Sigmoid colon (tissue), 7 donors: ENCODE measurements at regions of chr19 and their contacts with region 1.

Region 1: DNA sequence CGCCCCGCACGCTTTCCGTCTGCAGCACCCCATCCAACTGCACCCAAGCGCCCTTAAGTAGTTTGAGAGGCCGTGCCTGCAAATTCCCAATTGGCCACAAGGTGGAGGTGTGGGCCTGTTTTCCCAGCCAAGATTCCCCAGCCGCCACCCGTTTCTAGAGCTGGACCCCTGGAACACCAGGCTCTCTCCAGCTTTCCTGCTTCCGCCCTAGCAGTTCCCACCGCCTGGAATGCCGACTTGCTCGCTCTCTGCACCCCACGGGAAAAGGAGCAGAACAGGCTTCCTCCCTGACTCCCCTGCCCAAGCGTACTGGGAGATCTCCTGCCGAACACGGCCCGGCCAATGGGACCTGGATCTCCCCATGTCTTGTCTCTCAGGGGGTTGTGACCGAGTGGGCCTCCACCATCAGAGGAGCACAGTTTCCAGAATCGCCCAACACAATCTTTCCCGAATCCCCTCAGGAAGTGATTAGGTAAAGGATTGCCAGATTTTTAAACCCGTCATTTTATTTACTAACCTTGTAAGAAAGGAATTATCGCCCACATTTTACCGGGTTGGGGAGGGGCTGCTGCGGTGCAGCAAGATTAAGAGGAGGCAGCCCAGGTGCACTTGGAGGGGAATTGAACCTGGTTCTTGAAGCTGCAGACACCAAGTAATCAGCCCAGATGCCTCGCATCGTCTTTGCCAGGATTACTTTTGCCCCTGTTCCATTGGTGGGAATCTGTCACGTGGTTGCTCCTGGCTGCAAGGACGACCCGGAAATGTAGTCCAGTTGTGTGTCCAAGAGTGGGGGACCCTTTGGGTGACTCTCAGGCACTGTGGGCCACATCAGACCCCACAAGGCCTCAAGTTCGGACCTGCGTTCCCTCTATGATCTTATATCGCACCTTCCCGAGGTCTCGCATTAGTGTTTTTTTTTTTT is 3.5 kb upstream of the NAPSA start:
- DNase-seq: peak; percentile 93
- H3K4me3 ChIP-seq: peak overlapping the region; percentile 50 to 61 (median 58)
- H3K27ac ChIP-seq: peak overlapping the region; percentile 67 to 84 (median 79)
- H3K4me1 ChIP-seq: peaks cover 0 to 5% (median 2%) of the 10 kb centered on the region in 4 donors
- H3K27me3 ChIP-seq: no peaks in the 10 kb centered on the region
- CTCF ChIP-seq: peak; percentile 65 to 93 (median 87)
- EP300 ChIP-seq: no peak
- POLR2A ChIP-seq: no peak

Region 2: GRCh38 chr19:50414864-50415660 is 46.2 kb after region 1 on chr19:
- intact Hi-C with region 1: loop called (anchors 1 kb)
- DNase-seq: peak; percentile 86
- H3K4me3 ChIP-seq: no peak overlapping the region
- H3K27ac ChIP-seq: no peak overlapping the region
- H3K4me1 ChIP-seq: peaks cover 0 to 9% (median 7%) of the 10 kb centered on the region in 4 donors
- H3K27me3 ChIP-seq: peaks cover 17 to 37% (median 31%) of the 10 kb centered on the region in 3 donors
- CTCF ChIP-seq: peak; percentile 66 to 90 (median 71)
- EP300 ChIP-seq: no peak
- POLR2A ChIP-seq: no peak

Region 3: DNA sequence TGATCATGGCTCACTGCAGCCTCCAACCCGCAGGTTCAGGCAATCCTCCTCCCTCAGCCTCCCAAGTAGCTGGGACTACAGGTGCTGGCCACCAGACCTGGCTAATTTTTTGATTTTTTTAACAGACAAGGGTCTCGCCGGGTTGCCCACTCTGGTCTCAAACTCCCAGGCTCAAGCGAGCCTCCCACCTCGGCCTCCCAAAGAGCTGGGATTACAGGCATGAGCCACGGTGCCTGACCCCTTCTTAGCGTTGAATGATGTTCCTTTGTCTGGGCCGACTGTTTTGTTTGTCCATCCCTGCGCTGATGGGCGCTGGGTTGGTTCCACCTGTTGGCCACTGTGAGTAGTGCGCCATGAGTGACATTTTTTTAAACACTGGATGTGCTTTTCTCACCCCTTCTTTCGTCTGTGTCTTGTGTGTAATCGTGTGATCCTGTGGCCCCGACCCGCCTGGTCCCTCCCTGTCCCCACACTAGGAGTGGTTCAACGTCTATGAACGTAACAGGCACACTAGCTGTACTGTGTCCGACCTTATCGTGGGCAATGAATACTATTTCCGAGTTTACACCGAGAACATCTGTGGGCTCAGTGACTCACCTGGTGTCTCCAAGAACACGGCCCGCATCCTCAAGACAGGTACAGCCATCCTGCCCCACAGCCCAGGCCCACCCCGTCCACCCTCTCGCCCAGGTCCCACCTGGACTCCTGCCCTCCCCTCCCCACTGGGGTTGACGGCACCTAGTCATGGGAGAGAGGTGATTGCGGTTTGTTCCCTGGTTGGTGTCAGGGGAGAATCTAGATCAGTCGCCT is 92.4 kb after region 1 on chr19:
- intact Hi-C with region 1: loop called (anchors 2 kb)
- DNase-seq: no peak
- H3K4me3 ChIP-seq: no peak overlapping the region
- H3K27ac ChIP-seq: no peak overlapping the region
- H3K4me1 ChIP-seq: no peaks in the 10 kb centered on the region
- H3K27me3 ChIP-seq: peaks cover 4 to 50% (median 26%) of the 10 kb centered on the region in 3 donors
- CTCF ChIP-seq: peak; percentile 38 to 75 (median 71)
- EP300 ChIP-seq: no peak
- POLR2A ChIP-seq: no peak

Region 4: DNA sequence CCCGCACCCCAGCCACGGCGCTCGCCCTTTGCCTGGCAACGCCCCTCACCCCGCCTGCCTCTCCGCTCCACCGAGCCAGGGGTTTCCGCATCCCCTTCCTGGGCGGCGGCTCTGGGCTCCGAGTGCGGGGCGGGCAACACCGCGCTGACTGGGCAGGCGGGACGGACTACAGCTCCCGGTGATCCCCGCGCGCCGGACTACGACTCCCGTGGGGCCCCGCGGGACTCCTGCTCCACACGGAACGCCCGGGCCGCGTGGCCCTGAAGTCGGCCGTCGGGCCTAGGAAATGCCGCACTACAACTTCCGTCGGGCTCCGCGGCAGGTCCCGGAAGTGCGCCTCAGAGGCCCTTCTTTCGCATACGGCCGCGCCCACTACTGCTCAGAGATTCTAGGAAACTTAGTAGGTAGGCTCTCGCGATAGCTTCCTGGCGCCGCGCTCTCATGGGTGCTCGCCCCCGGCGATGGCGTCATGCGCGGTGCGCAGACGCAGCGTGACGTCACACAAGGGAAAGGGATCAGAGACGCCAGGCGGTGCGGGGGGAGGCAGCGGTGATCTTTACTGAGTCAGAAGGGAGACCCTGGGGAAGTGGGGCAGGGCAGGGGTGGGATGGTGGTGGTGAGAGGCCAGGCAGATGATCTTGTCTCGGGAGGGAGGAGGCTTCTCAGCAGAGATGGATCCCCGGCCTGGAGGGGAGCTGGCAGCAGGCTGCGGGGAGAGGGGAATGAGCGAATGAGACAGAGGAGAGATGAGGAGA is 142.3 kb after region 1 on chr19 and contains the start of gene JOSD2:
- intact Hi-C with region 1: loop called (anchors 2 kb)
- DNase-seq: peak; percentile 99
- H3K4me3 ChIP-seq: peak within 1 kb of the TSS; percentile 56 to 94 (median 80)
- H3K27ac ChIP-seq: peak within 1 kb of the TSS; percentile 76 to 80 (median 78)
- H3K4me1 ChIP-seq: peaks cover 0 to 15% (median 9%) of the 10 kb centered on the region in 4 donors
- H3K27me3 ChIP-seq: peaks cover 0 to 10% (median 0%) of the 10 kb centered on the region in 3 donors
- CTCF ChIP-seq: no peak
- EP300 ChIP-seq: peak in 1 of 4 donors; percentile 50
- POLR2A ChIP-seq: peak in 1 of 2 donors; percentile 62
- total RNA-seq, gene JOSD2: 23.5 to 47.9 (median 33.7) TPM

Region 5: DNA sequence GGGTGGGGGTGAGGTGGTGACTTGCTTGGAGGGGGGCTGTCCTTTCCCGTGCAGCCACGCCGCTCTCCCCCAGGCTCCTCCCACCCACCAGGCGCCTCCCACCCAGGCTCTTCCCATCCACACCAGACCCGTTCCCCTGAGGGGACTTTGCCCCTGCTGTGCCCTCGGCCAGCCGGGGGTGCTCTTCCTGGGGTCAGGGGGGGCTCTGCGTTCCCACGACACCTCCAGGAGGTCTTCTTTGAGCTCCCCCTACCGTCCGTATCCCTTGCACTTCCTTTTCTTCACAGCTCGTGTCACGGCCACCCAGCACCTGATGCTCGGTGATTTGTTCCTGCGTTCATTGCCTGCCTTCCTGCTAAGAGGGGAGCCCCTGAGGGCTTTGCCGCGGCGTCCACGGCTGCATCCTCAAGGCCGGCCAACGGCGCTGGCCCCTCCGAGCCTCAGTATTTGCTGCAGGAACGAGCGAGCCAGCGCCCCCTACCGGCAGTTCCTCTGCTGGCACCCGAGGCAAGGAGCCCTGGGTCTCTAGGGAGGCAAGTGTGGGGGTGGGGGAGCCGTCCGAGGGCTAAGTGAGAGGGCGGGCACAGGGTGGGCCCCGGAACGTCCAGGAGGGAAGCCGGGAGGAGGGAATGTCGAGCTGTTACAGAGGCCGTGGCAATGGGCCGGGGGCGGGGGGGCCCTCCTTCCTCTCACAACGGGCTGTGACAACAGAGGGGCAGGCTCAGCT is 187.5 kb after region 1 on chr19:
- intact Hi-C with region 1: loop called (anchors 5 kb)
- DNase-seq: peak; percentile 80
- H3K4me3 ChIP-seq: peak overlapping the region in 3 of 4 donors; percentile 20 to 44 (median 44)
- H3K27ac ChIP-seq: peak overlapping the region in 1 of 4 donors; percentile 27
- H3K4me1 ChIP-seq: peaks cover 0 to 16% (median 12%) of the 10 kb centered on the region in 4 donors
- H3K27me3 ChIP-seq: peaks cover 12 to 70% (median 62%) of the 10 kb centered on the region in 3 donors
- CTCF ChIP-seq: peak in 2 of 4 experiments; percentile 53 to 65
- EP300 ChIP-seq: no peak
- POLR2A ChIP-seq: no peak

Region 6: GRCh38 chr19:50601407-50602088 is 232.6 kb after region 1 on chr19:
- intact Hi-C with region 1: no loop called
- DNase-seq: no peak
- H3K4me3 ChIP-seq: no peak overlapping the region
- H3K27ac ChIP-seq: no peak overlapping the region
- H3K4me1 ChIP-seq: no peaks in the 10 kb centered on the region
- H3K27me3 ChIP-seq: peaks cover 0 to 47% (median 3%) of the 10 kb centered on the region in 3 donors
- CTCF ChIP-seq: no peak
- EP300 ChIP-seq: no peak
- POLR2A ChIP-seq: no peak

Region 7: GRCh38 chr19:50724522-50725217 is 355.8 kb after region 1 on chr19:
- intact Hi-C with region 1: loop called (anchors 10 kb)
- DNase-seq: peak; percentile 100
- H3K4me3 ChIP-seq: peak overlapping the region; percentile 51 to 70 (median 64)
- H3K27ac ChIP-seq: peak overlapping the region; percentile 63 to 83 (median 70)
- H3K4me1 ChIP-seq: peaks cover 0 to 23% (median 19%) of the 10 kb centered on the region in 4 donors
- H3K27me3 ChIP-seq: peaks cover 4 to 67% (median 45%) of the 10 kb centered on the region in 3 donors
- CTCF ChIP-seq: peak; percentile 56 to 71 (median 58)
- EP300 ChIP-seq: no peak
- POLR2A ChIP-seq: peak in 1 of 2 donors; percentile 15